ENCODE measurements at regions of chr5 and their contacts with region 1.

Region 1: DNA sequence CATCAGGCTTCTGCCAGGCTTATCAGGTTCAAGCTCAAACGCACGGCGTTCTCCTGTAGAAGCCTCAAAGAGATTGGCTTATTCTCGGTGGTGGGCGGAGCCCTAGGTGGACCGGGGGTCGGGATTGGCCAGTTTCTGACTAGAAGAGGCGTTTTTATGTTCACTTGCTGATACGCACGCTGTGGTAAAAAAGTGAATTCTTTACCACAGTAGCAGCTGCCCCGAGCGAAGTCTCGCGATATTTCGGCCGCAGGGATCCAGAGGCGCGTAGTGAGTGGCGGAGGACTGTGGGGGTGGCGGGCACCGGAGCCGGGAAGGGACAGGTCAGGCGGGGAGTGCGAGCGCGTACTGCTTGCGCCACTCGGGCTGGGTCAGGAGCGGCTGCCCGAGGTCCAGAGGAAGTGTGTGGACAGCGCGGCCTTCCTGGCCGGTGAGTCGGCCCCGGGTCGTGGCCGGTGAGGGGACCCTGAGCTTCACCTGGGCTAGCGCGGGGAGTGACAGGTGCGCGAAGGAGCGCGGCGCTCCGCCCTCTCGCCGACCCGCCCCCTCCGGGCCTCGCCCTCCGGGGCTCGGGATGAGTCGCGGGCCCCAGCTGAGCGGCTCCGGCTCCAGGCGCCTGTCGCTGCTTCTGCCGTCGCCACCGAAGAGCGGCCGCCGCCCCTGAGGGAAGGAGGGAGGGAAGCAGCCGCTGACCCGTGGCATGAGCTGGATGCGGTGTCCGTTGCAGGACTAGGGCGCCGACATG is at the start of gene DMXL1:
- DNase-seq: peak; percentile 97 to 100 (median 98)

Region 2: DNA sequence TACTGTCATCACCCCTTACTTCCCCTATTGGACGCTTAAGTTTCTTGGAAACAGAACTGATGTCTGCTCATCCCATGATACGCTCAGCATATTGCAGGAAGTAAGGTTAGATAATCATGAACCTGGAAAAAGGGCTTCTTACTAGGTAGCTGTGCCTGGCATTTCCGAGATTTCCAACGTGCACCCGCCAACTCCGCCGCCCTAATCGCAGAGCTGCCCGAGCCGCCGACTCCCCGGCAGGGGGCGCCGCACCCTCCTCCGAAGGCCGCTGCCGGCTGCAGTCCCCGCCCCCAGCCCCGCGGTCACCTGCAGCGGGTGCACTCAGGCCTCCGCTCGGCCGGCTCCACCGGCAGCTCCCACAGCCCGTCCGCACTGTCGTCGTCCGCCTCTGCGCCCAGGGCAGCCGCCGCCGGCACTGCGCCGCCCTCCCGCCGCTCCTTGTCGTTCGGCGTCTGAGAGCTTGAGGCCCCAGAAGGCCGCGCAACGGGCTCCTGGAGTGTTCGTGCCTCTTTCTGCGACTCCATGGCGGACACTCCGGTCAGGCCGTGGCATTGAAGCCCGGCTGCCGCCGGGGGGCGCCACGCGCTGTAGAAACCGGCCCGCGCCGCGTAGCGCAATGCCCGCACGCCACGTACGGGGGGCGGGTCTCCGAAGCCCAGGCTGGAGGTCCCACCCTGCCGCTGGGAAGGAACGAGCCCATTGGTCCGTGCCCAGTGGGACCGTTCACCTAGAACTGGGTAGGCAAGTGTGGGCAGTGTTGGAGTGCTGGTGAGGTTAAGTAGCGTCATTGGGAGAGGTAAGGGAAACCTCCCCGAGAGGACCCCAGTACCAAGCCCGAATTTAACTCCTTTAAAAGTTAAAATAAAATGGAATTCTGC is 82.8 kb before region 1 on chr5 and contains the start of gene DTWD2:
- intact Hi-C with region 1: loop called (anchors 5 kb)
- DNase-seq: peak; percentile 85 to 99 (median 94)

Region 3: GRCh38 chr5:119267958-119268386 is 197.0 kb after region 1 on chr5:
- intact Hi-C with region 1: loop called (anchors 2 kb)
- DNase-seq: peak; percentile 73 to 98 (median 88)